CD8-positive, alpha-beta T cell (primary cell): ENCODE measurements at regions of chr1 and their contacts with region 1.

Region 1: DNA sequence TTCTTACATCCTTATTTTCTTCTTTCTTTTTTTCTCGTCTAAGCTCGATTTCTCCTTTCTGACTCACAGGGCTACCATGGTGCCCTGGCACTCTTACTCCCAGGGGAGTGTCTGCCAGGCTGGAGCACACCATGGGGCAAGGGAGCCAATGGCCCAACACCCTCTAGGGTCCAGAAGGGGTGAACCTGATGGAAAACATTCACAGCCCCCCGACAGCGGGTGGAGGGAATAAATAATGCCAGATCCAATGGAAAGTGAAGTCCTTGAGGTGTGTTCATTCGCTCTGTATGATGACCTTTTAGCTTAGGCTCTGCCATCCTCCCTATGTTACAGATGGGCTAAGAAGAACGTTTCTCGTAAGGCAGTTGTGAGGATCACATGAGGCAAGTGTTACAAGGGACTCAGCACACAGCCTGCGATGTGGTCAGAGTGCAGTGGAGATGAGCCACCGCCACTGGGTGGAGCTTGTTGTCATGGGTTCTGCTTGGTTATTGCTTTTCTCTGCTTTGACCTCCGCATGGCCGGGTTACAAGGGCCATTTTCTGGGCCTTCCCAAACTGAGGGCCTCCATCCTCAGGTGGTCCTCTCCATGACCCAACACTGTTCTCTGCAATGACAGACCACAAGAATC is 3.5 kb upstream of the FCMR start:
- DNase-seq: peak; percentile 49 to 90 (median 70)
- ATAC-seq: peak; percentile 40
- H3K4me3 ChIP-seq: no peak overlapping the region
- H3K4me3 Mint-ChIP-seq: no peak overlapping the region
- H3K27ac ChIP-seq: peak overlapping the region; percentile 46 to 95
- H3K27ac Mint-ChIP-seq: no peak overlapping the region
- H3K4me1 ChIP-seq: peaks cover 62% of the 10 kb centered on the region
- H3K4me1 Mint-ChIP-seq: peaks cover 51% of the 10 kb centered on the region
- H3K27me3 ChIP-seq: no peaks in the 10 kb centered on the region
- H3K27me3 Mint-ChIP-seq: no peaks in the 10 kb centered on the region
- CTCF ChIP-seq: no peak

Region 2: GRCh38 chr1:206556750-206557635 is 368.2 kb before region 1 on chr1:
- CTCF ChIA-PET with region 1: no interaction called
- POLR2A ChIA-PET with region 1: no interaction called
- intact Hi-C with region 1: loop called in 1 of 2 experiments (anchors 5 kb)
- DNase-seq: peak; percentile 72 to 95 (median 92)
- ATAC-seq: peak; percentile 64
- H3K4me3 ChIP-seq: peak overlapping the region; percentile 82 to 94
- H3K4me3 Mint-ChIP-seq: peak overlapping the region; percentile 95
- H3K27ac ChIP-seq: peak overlapping the region; percentile 81
- H3K27ac Mint-ChIP-seq: peak overlapping the region; percentile 95
- H3K4me1 ChIP-seq: peaks cover 69% of the 10 kb centered on the region
- H3K4me1 Mint-ChIP-seq: peaks cover 79% of the 10 kb centered on the region
- H3K27me3 ChIP-seq: no peaks in the 10 kb centered on the region
- H3K27me3 Mint-ChIP-seq: no peaks in the 10 kb centered on the region
- CTCF ChIP-seq: no peak

Region 3: GRCh38 chr1:206803221-206803730 is 121.9 kb before region 1 on chr1:
- CTCF ChIA-PET with region 1: interaction called, 82 read pairs
- POLR2A ChIA-PET with region 1: interaction called, 14 read pairs
- intact Hi-C with region 1: loop called in 1 of 2 experiments (anchors 5 kb)
- DNase-seq: peak; percentile 59 to 98 (median 74)
- ATAC-seq: peak; percentile 91
- H3K4me3 ChIP-seq: no peak overlapping the region
- H3K4me3 Mint-ChIP-seq: peak overlapping the region; percentile 40
- H3K27ac ChIP-seq: peak overlapping the region; percentile 51 to 83
- H3K27ac Mint-ChIP-seq: peak overlapping the region; percentile 96
- H3K4me1 ChIP-seq: peaks cover 46% of the 10 kb centered on the region
- H3K4me1 Mint-ChIP-seq: peaks cover 71% of the 10 kb centered on the region
- H3K27me3 ChIP-seq: no peaks in the 10 kb centered on the region
- H3K27me3 Mint-ChIP-seq: no peaks in the 10 kb centered on the region
- CTCF ChIP-seq: no peak

Region 4: GRCh38 chr1:206895830-206896242 is 29.4 kb before region 1 on chr1:
- CTCF ChIA-PET with region 1: interaction called, 4 read pairs
- POLR2A ChIA-PET with region 1: interaction called, 312 read pairs
- intact Hi-C with region 1: no loop called
- DNase-seq: no peak
- ATAC-seq: no peak
- H3K4me3 ChIP-seq: no peak overlapping the region
- H3K4me3 Mint-ChIP-seq: no peak overlapping the region
- H3K27ac ChIP-seq: no peak overlapping the region
- H3K27ac Mint-ChIP-seq: no peak overlapping the region
- H3K4me1 ChIP-seq: peaks cover 18% of the 10 kb centered on the region
- H3K4me1 Mint-ChIP-seq: peaks cover 42% of the 10 kb centered on the region
- H3K27me3 ChIP-seq: no peaks in the 10 kb centered on the region
- H3K27me3 Mint-ChIP-seq: no peaks in the 10 kb centered on the region
- CTCF ChIP-seq: no peak

Region 5: DNA sequence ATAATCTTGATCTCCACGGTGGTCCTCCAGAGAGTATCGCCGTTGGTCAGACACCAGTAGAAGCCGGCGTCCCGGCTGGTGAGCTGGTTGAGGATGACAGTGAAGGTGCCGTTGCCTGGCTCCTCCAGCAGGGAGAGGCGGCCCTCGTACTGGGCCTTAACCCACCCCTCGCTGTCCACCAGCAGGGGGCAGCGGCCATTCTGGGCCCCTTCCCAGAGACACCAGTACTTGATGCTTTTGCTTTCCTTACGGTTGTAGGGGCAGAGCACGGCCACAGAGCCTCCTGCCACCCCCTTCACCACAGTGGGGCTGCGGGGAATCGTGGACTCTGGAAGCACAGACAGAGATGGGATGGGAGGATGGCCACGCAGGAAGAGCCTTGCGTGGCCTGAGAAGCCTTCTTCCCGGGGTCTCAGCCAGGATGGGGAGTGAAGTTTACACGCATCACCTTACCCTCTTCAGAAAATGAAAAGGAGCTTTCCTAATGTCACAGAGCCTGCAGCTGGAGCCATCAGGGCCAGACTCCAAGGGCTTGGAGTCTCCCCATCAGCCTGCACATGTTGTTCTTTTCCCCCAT is 10.4 kb after region 1 on chr1:
- CTCF ChIA-PET with region 1: interaction called, 395 read pairs
- POLR2A ChIA-PET with region 1: interaction called, 123 read pairs
- intact Hi-C with region 1: loop called in 1 of 2 experiments (anchors 1 kb)
- DNase-seq: peak in 6 of 9 experiments; percentile 41 to 65 (median 52)
- ATAC-seq: peak; percentile 45
- H3K4me3 ChIP-seq: no peak overlapping the region
- H3K4me3 Mint-ChIP-seq: no peak overlapping the region
- H3K27ac ChIP-seq: no peak overlapping the region
- H3K27ac Mint-ChIP-seq: no peak overlapping the region
- H3K4me1 ChIP-seq: peaks cover 20% of the 10 kb centered on the region
- H3K4me1 Mint-ChIP-seq: peaks cover 26% of the 10 kb centered on the region
- H3K27me3 ChIP-seq: no peaks in the 10 kb centered on the region
- H3K27me3 Mint-ChIP-seq: no peaks in the 10 kb centered on the region
- CTCF ChIP-seq: peak; percentile 48

Region 6: GRCh38 chr1:206967096-206967849 is 42.1 kb after region 1 on chr1:
- CTCF ChIA-PET with region 1: no interaction called
- POLR2A ChIA-PET with region 1: no interaction called
- intact Hi-C with region 1: no loop called
- DNase-seq: peak in 1 of 9 experiments; percentile 25
- ATAC-seq: no peak
- H3K4me3 ChIP-seq: no peak overlapping the region
- H3K4me3 Mint-ChIP-seq: no peak overlapping the region
- H3K27ac ChIP-seq: no peak overlapping the region
- H3K27ac Mint-ChIP-seq: peak overlapping the region; percentile 14
- H3K4me1 ChIP-seq: peaks cover 18% of the 10 kb centered on the region
- H3K4me1 Mint-ChIP-seq: peaks cover 26% of the 10 kb centered on the region
- H3K27me3 ChIP-seq: no peaks in the 10 kb centered on the region
- H3K27me3 Mint-ChIP-seq: no peaks in the 10 kb centered on the region
- CTCF ChIP-seq: no peak

Region 7: DNA sequence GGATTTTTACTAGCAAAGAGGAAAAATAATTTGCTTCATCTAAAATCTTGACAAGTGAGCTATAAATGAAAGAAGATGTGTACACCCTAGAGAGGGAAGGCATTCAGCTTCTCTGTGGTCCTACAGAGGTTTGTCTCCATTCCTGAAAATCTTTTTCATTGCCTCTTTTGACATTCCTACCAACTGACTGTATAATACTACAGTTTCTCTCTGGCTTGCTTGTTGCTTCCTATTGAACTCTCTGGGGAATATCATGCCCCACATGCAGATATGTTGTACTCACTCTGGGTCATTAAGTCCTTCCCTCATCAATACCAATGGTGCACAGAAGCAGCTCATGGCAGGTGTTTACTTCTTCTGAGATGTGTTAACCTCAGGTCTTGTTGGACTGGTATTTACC is 1690.2 kb after region 1 on chr1:
- CTCF ChIA-PET with region 1: no interaction called
- POLR2A ChIA-PET with region 1: no interaction called
- intact Hi-C with region 1: no loop called
- DNase-seq: no peak
- ATAC-seq: no peak
- H3K4me3 ChIP-seq: no peak overlapping the region
- H3K4me3 Mint-ChIP-seq: no peak overlapping the region
- H3K27ac ChIP-seq: no peak overlapping the region
- H3K27ac Mint-ChIP-seq: no peak overlapping the region
- H3K4me1 ChIP-seq: no peaks in the 10 kb centered on the region
- H3K4me1 Mint-ChIP-seq: no peaks in the 10 kb centered on the region
- H3K27me3 ChIP-seq: no peaks in the 10 kb centered on the region
- H3K27me3 Mint-ChIP-seq: no peaks in the 10 kb centered on the region
- CTCF ChIP-seq: no peak